Endothelial cell of umbilical vein (primary cell): ENCODE measurements at regions of chr1 and their contacts with region 1.

Region 1: DNA sequence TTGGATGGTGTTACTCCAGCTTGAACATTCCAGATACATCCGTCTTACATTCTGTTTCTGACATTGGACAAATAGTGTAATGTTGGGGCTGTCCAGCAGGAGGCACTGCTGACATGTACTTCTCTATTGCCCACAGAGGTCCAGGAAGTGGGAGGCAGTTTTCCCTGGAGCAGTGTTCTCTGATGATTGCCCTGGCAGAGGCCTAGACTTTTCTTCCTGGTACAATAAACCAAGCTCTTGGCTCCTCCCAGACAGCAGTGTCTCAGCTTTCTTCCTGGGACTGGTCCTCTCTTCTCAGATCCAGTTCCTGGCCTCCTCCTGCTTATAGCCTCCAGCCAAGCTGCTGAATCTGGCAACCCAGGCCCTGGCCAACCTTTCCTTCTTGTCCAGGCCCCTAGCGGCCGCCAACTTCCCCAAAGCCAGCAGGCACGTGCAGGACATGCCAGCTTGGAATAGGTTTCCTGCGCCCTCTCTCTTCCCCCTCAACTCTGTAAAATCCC is 14.9 kb upstream of the IFNLR1 start:
- DNase-seq: peak; percentile 90
- H3K4me3 ChIP-seq: no peak overlapping the region
- H3K27ac ChIP-seq: no peak overlapping the region
- H3K4me1 ChIP-seq: peaks cover 2% of the 10 kb centered on the region
- H3K27me3 ChIP-seq: no peaks in the 10 kb centered on the region
- CTCF ChIP-seq: peak; percentile 68 to 88
- POLR2A ChIP-seq: no peak

Region 2: GRCh38 chr1:24186993-24187805 is 14.8 kb before region 1 on chr1 and contains the start of gene IFNLR1:
- CTCF ChIA-PET with region 1: interaction called, 77 read pairs
- POLR2A ChIA-PET with region 1: no interaction called
- dilution Hi-C with region 1: no loop called
- intact Hi-C with region 1: no loop called
- DNase-seq: no peak
- H3K4me3 ChIP-seq: peak within 1 kb of the TSS; percentile 17 to 42 (median 34)
- H3K27ac ChIP-seq: no peak within 1 kb of the TSS
- H3K4me1 ChIP-seq: peaks cover 2% of the 10 kb centered on the region
- H3K27me3 ChIP-seq: peaks cover 13 to 14% of the 10 kb centered on the region in 2 experiments
- CTCF ChIP-seq: no peak
- POLR2A ChIP-seq: no peak
- total RNA-seq, gene IFNLR1: not detected in 2 replicates

Region 3: GRCh38 chr1:24308365-24309015 is 106.5 kb after region 1 on chr1:
- CTCF ChIA-PET with region 1: interaction called, 19 read pairs
- POLR2A ChIA-PET with region 1: no interaction called
- dilution Hi-C with region 1: no loop called
- intact Hi-C with region 1: no loop called
- DNase-seq: no peak
- H3K4me3 ChIP-seq: no peak overlapping the region
- H3K27ac ChIP-seq: no peak overlapping the region
- H3K4me1 ChIP-seq: no peaks in the 10 kb centered on the region
- H3K27me3 ChIP-seq: peaks cover 9 to 20% of the 10 kb centered on the region in 2 experiments
- CTCF ChIP-seq: peak in 1 of 2 donors; percentile 17
- POLR2A ChIP-seq: no peak

Region 4: GRCh38 chr1:24373044-24373443 is 171.1 kb after region 1 on chr1:
- CTCF ChIA-PET with region 1: interaction called, 10 read pairs
- POLR2A ChIA-PET with region 1: no interaction called
- dilution Hi-C with region 1: no loop called
- intact Hi-C with region 1: no loop called
- DNase-seq: no peak
- H3K4me3 ChIP-seq: no peak overlapping the region
- H3K27ac ChIP-seq: no peak overlapping the region
- H3K4me1 ChIP-seq: no peaks in the 10 kb centered on the region
- H3K27me3 ChIP-seq: no peaks in the 10 kb centered on the region
- CTCF ChIP-seq: no peak
- POLR2A ChIP-seq: no peak

Region 5: DNA sequence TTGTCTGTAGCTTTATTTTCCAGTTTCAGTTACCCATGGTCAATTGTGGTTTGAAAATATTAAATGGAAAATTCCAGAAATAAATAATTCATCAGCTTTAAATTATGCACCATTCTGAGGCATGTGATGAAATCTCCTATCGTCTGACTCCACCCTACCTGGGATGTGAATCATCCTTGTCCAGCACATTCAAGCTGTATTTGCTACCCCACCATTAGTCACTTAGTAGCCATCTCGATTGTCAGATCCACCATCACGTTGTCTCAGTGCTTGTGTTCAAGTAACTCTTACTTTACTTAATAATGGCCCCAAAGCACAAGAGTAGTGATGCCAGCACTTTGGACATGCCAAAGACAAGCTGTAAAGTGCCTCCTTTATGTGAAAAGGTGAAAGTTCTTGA is 207.5 kb after region 1 on chr1:
- CTCF ChIA-PET with region 1: interaction called, 10 read pairs
- POLR2A ChIA-PET with region 1: interaction called, 3 read pairs
- dilution Hi-C with region 1: no loop called
- intact Hi-C with region 1: no loop called
- DNase-seq: peak; percentile 49
- H3K4me3 ChIP-seq: no peak overlapping the region
- H3K27ac ChIP-seq: no peak overlapping the region
- H3K4me1 ChIP-seq: peaks cover 19% of the 10 kb centered on the region
- H3K27me3 ChIP-seq: no peaks in the 10 kb centered on the region
- CTCF ChIP-seq: no peak
- POLR2A ChIP-seq: no peak

Region 6: GRCh38 chr1:24558902-24559791 is 357.2 kb after region 1 on chr1:
- CTCF ChIA-PET with region 1: no interaction called
- POLR2A ChIA-PET with region 1: no interaction called
- dilution Hi-C with region 1: no loop called
- intact Hi-C with region 1: no loop called
- DNase-seq: peak; percentile 32
- H3K4me3 ChIP-seq: no peak overlapping the region
- H3K27ac ChIP-seq: no peak overlapping the region
- H3K4me1 ChIP-seq: no peaks in the 10 kb centered on the region
- H3K27me3 ChIP-seq: peaks cover 38 to 41% of the 10 kb centered on the region in 2 experiments
- CTCF ChIP-seq: no peak
- POLR2A ChIP-seq: no peak

Region 7: GRCh38 chr1:24586970-24587820 is 385.2 kb after region 1 on chr1:
- CTCF ChIA-PET with region 1: interaction called, 59 read pairs
- POLR2A ChIA-PET with region 1: no interaction called
- dilution Hi-C with region 1: no loop called
- intact Hi-C with region 1: loop called (anchors 5 kb)
- DNase-seq: peak; percentile 39
- H3K4me3 ChIP-seq: no peak overlapping the region
- H3K27ac ChIP-seq: no peak overlapping the region
- H3K4me1 ChIP-seq: no peaks in the 10 kb centered on the region
- H3K27me3 ChIP-seq: peaks cover 0 to 6% of the 10 kb centered on the region in 2 experiments
- CTCF ChIP-seq: peak; percentile 74 to 78
- POLR2A ChIP-seq: no peak